ENCODE measurements at regions of chr11 and their contacts with region 1.

Region 1: GRCh38 chr11:95231127-95231880 is at the start of gene SESN3:
- DNase-seq: peak; percentile 99
- H3K4me3 ChIP-seq: peak within 1 kb of the TSS; percentile 43 to 65 (median 49)
- H3K27ac ChIP-seq: no peak within 1 kb of the TSS
- H3K4me1 ChIP-seq: peaks cover 11% of the 10 kb centered on the region
- H3K27me3 ChIP-seq: peaks cover 15 to 43% of the 10 kb centered on the region in 2 experiments
- CTCF ChIP-seq: no peak
- POLR2A ChIP-seq: no peak
- total RNA-seq, gene SESN3: 5.6 and 6.9 TPM in 2 replicates

Region 2: DNA sequence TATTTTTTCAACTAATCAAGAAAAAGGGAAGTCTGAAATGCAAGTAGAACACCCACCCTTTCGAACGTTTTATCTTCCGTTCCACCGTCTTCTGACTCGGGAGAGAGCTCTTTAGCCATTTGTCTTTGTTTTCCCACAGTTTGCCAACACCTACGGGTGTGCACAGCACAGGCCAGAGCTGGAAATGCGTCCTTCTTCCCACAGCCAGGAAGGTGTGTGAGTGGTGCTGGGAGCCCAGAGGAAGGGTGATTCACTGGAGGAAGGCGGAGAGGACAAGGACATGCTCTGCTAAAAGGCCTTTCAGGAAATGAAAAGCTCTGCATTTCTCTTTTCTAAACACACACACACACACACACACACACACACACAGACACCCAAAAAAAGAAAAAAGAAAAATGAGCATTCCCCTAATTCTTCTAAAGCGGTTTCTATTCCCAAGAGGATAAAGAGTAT is 123.1 kb before region 1 on chr11:
- CTCF ChIA-PET with region 1: no interaction called
- POLR2A ChIA-PET with region 1: no interaction called
- dilution Hi-C with region 1: no loop called
- intact Hi-C with region 1: loop called (anchors 2 kb)
- DNase-seq: peak; percentile 90
- H3K4me3 ChIP-seq: peak overlapping the region in 1 of 3 experiments; percentile 5
- H3K27ac ChIP-seq: peak overlapping the region; percentile 76
- H3K4me1 ChIP-seq: peaks cover 28% of the 10 kb centered on the region
- H3K27me3 ChIP-seq: no peaks in the 10 kb centered on the region
- CTCF ChIP-seq: no peak
- POLR2A ChIP-seq: peak; percentile 31

Region 3: DNA sequence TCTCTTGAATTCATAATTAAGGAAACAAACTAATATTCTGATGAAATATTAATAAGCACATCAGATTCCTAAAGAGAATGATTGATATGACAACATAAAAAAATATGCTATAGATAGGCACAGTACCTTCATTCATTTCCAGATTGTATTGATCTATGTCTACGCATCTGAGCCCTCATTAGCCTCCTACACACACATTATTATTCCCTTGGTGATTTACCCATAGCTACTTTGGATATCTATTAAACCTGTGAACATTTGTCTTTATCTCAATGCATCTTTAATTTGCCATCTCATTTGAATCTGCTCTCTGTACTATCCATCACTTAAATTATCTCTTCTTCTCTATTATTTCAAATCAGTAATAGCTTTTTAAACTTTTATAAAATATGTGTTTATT is 18.7 kb before region 1 on chr11:
- CTCF ChIA-PET with region 1: no interaction called
- POLR2A ChIA-PET with region 1: no interaction called
- dilution Hi-C with region 1: no loop called
- intact Hi-C with region 1: no loop called
- DNase-seq: no peak
- H3K4me3 ChIP-seq: no peak overlapping the region
- H3K27ac ChIP-seq: no peak overlapping the region
- H3K4me1 ChIP-seq: no peaks in the 10 kb centered on the region
- H3K27me3 ChIP-seq: no peaks in the 10 kb centered on the region
- CTCF ChIP-seq: no peak
- POLR2A ChIP-seq: no peak

Region 4: DNA sequence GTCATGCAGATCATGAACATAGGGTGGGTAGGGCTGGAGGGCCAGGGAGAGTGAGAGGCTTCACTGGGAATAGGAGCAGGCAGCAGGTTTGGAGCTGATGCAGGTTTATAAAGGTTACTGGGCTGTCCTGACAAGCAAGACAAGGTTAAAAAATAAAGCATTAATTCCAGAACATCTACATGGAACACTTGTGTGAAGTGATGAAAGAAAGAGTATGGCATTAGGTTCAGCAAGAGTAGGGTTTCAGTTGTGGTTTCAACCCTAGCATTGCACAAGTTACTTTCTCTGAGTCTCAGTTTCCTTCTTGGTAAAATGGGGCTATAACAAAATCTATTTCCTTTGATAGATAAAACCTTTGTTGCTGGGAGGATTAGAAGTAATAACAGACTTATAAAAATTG is 114.3 kb after region 1 on chr11:
- CTCF ChIA-PET with region 1: no interaction called
- POLR2A ChIA-PET with region 1: no interaction called
- dilution Hi-C with region 1: no loop called
- intact Hi-C with region 1: no loop called
- DNase-seq: no peak
- H3K4me3 ChIP-seq: no peak overlapping the region
- H3K27ac ChIP-seq: no peak overlapping the region
- H3K4me1 ChIP-seq: no peaks in the 10 kb centered on the region
- H3K27me3 ChIP-seq: no peaks in the 10 kb centered on the region
- CTCF ChIP-seq: no peak
- POLR2A ChIP-seq: no peak

Region 5: DNA sequence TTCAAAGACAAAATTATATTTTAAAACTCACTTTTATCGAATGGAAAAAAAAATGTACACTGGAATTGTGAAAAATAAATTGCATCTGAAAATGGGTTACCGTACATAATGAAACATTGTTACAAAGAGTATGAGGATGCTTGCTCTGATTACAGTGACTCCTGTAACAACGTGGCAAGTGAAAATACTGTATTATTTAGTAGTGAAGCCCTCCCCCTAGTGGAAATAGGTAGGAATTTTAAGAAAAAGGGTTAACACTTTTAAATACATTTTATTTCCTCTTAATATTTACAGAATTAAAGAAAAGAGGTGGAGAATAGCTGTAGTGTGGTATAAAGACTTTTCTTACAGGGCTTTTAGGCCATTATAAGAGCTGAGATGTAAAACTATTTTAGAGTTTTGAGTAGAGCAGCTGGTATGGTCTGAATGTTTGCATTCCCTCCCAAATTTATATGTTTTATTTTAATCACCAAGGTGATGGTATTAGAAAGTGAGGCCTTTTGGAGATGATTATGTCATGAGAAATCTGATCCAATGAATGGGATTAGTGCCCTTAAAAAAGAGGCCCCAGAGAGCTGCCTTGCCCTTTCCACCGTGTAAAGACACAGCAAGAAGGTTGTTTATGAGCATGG is 533.1 kb after region 1 on chr11:
- CTCF ChIA-PET with region 1: no interaction called
- POLR2A ChIA-PET with region 1: no interaction called
- dilution Hi-C with region 1: no loop called
- intact Hi-C with region 1: loop called (anchors 5 kb)
- DNase-seq: peak; percentile 70
- H3K4me3 ChIP-seq: no peak overlapping the region
- H3K27ac ChIP-seq: no peak overlapping the region
- H3K4me1 ChIP-seq: no peaks in the 10 kb centered on the region
- H3K27me3 ChIP-seq: peaks cover 5 to 6% of the 10 kb centered on the region in 2 experiments
- CTCF ChIP-seq: peak; percentile 33 to 37
- POLR2A ChIP-seq: no peak